Mammary epithelial cell (primary cell): ENCODE measurements at regions of chr1 and their contacts with region 1.

Region 1: GRCh38 chr1:40862008-40862863 is at the start of gene CITED4:
- DNase-seq: peak; percentile 95
- H3K4me3 ChIP-seq: peak within 1 kb of the TSS; percentile 59 to 82 (median 62)
- H3K27ac ChIP-seq: peak within 1 kb of the TSS; percentile 52
- H3K4me1 ChIP-seq: peaks cover 28% of the 10 kb centered on the region
- H3K27me3 ChIP-seq: no peaks in the 10 kb centered on the region
- CTCF ChIP-seq: peak; percentile 36 to 47
- total RNA-seq, gene CITED4: 54.8 to 140 TPM

Region 2: GRCh38 chr1:40899230-40899870 is 37.1 kb after region 1 on chr1:
- CTCF ChIA-PET with region 1: no interaction called
- dilution Hi-C with region 1: no loop called
- in situ Hi-C with region 1: no loop called
- intact Hi-C with region 1: loop called (anchors 1 kb)
- DNase-seq: peak; percentile 95
- H3K4me3 ChIP-seq: no peak overlapping the region
- H3K27ac ChIP-seq: peak overlapping the region; percentile 79
- H3K4me1 ChIP-seq: peaks cover 55% of the 10 kb centered on the region
- H3K27me3 ChIP-seq: no peaks in the 10 kb centered on the region
- CTCF ChIP-seq: no peak